ENCODE measurements at regions of chr2 and their contacts with region 1.

Region 1: GRCh38 chr2:62195421-62196277 is at the start of gene B3GNT2:
- DNase-seq: peak; percentile 90
- ATAC-seq: peak; percentile 81
- H3K4me3 ChIP-seq: peak within 1 kb of the TSS; percentile 68 to 96 (median 93)
- H3K4me3 Mint-ChIP-seq: peak within 1 kb of the TSS; percentile 91
- H3K27ac ChIP-seq: peak within 1 kb of the TSS; percentile 80 to 89
- H3K27ac Mint-ChIP-seq: peak within 1 kb of the TSS; percentile 89
- H3K4me1 ChIP-seq: peaks cover 38 to 44% of the 10 kb centered on the region in 2 donors
- H3K4me1 Mint-ChIP-seq: peaks cover 37% of the 10 kb centered on the region
- H3K27me3 ChIP-seq: no peaks in the 10 kb centered on the region
- H3K27me3 Mint-ChIP-seq: no peaks in the 10 kb centered on the region
- CTCF ChIP-seq: no peak
- total RNA-seq, gene B3GNT2: 14.2 and 14.3 TPM in 2 replicates

Region 2: DNA sequence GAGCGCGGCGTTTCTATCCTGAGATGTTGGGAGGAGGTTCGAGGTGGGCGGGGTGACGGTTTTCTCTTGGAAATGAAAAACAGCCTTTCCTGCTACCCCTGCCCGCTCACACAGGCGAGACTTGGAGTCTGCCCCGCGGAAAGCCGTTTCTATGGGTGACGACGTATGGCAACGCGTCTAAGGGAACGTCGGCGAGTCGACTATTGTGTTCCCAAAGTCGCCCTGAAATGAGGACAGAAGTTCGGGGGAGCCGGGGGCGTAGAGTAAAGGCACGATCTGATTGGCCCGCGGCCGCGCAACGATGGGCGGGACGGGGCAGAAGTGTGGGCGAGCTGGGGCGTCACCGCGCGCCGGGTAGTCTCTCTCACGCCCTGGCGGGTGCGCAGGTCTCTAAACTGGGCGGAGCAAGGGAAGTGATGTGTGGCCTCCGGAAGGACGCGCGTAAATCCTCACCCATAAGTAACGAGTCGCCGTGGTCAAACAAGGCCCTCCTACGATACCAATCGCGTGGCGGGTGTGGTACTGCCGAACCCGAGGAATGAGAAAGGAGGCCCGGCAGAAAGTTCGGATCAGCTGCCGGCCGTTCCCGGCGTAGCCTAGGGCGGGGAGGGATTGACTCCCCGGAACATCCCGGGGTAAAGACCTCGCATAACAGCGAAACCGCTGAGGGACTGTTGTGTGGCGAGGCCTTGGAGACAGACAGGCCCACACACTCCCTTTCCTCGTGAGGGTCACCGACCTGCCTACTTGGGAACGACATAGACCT is 431.4 kb before region 1 on chr2:
- CTCF ChIA-PET with region 1: no interaction called
- POLR2A ChIA-PET with region 1: no interaction called
- intact Hi-C with region 1: loop called (anchors 2 kb)
- DNase-seq: peak; percentile 98
- ATAC-seq: peak; percentile 98
- H3K4me3 ChIP-seq: peak overlapping the region; percentile 89 to 94 (median 92)
- H3K4me3 Mint-ChIP-seq: peak overlapping the region; percentile 90
- H3K27ac ChIP-seq: peak overlapping the region; percentile 96 to 98
- H3K27ac Mint-ChIP-seq: peak overlapping the region; percentile 96
- H3K4me1 ChIP-seq: peaks cover 4 to 10% of the 10 kb centered on the region in 2 donors
- H3K4me1 Mint-ChIP-seq: peaks cover 14% of the 10 kb centered on the region
- H3K27me3 ChIP-seq: no peaks in the 10 kb centered on the region
- H3K27me3 Mint-ChIP-seq: peaks cover 2% of the 10 kb centered on the region
- CTCF ChIP-seq: no peak

Region 3: GRCh38 chr2:61910603-61911002 is 285.0 kb before region 1 on chr2:
- CTCF ChIA-PET with region 1: no interaction called
- POLR2A ChIA-PET with region 1: no interaction called
- intact Hi-C with region 1: loop called (anchors 5 kb)
- DNase-seq: no peak
- ATAC-seq: no peak
- H3K4me3 ChIP-seq: no peak overlapping the region
- H3K4me3 Mint-ChIP-seq: no peak overlapping the region
- H3K27ac ChIP-seq: no peak overlapping the region
- H3K27ac Mint-ChIP-seq: no peak overlapping the region
- H3K4me1 ChIP-seq: peaks cover 3 to 4% of the 10 kb centered on the region in 2 donors
- H3K4me1 Mint-ChIP-seq: peaks cover 9% of the 10 kb centered on the region
- H3K27me3 ChIP-seq: no peaks in the 10 kb centered on the region
- H3K27me3 Mint-ChIP-seq: no peaks in the 10 kb centered on the region
- CTCF ChIP-seq: no peak

Region 4: DNA sequence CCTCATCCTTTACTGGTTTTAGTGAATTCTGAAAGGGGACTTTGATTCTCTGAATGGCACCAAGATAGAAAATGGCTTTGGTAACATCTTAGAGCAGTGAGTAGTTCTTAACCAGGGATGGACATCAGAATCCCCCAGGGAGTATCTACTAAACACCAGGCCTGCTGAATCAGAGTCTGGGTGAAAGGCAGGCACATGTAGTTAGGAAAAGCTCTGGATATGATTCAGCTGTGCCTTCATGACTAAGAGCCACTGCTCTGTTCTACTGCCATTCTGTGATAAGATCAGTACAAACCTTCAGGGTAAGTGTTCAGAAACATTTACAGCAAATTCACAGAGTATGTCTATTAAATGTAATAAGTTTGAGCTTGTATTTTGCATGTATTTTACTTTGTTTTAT is 45.9 kb before region 1 on chr2:
- CTCF ChIA-PET with region 1: no interaction called
- POLR2A ChIA-PET with region 1: no interaction called
- intact Hi-C with region 1: loop called (anchors 5 kb)
- DNase-seq: no peak
- ATAC-seq: no peak
- H3K4me3 ChIP-seq: no peak overlapping the region
- H3K4me3 Mint-ChIP-seq: no peak overlapping the region
- H3K27ac ChIP-seq: no peak overlapping the region
- H3K27ac Mint-ChIP-seq: no peak overlapping the region
- H3K4me1 ChIP-seq: peaks cover 16 to 25% of the 10 kb centered on the region in 2 donors
- H3K4me1 Mint-ChIP-seq: peaks cover 28% of the 10 kb centered on the region
- H3K27me3 ChIP-seq: no peaks in the 10 kb centered on the region
- H3K27me3 Mint-ChIP-seq: no peaks in the 10 kb centered on the region
- CTCF ChIP-seq: no peak

Region 5: GRCh38 chr2:62178741-62179271 is 16.8 kb before region 1 on chr2:
- CTCF ChIA-PET with region 1: no interaction called
- POLR2A ChIA-PET with region 1: no interaction called
- intact Hi-C with region 1: no loop called
- DNase-seq: no peak
- ATAC-seq: no peak
- H3K4me3 ChIP-seq: no peak overlapping the region
- H3K4me3 Mint-ChIP-seq: no peak overlapping the region
- H3K27ac ChIP-seq: no peak overlapping the region
- H3K27ac Mint-ChIP-seq: no peak overlapping the region
- H3K4me1 ChIP-seq: peaks cover 11 to 13% of the 10 kb centered on the region in 2 donors
- H3K4me1 Mint-ChIP-seq: peaks cover 19% of the 10 kb centered on the region
- H3K27me3 ChIP-seq: no peaks in the 10 kb centered on the region
- H3K27me3 Mint-ChIP-seq: no peaks in the 10 kb centered on the region
- CTCF ChIP-seq: no peak

Region 6: DNA sequence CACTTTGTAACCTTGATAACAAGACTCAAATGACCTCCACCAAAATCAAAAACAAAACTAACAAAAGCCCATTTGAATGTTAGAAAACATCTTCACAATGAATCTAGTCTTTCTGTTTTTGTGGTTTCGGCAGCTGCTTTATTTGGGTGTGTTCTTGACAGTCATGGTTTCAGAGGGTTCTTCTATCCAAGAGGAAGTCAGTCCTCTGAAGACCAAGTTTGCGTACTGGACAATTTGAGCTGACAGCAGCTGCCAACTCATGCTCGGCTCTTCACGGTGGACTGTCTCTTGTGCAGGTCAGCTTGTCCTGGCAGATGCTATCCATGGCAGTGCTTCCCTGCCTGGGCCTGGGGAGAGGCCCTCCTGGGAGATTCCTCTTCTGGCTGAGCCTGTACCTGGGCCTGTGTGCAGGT is 219.4 kb after region 1 on chr2:
- CTCF ChIA-PET with region 1: interaction called, 7 read pairs
- POLR2A ChIA-PET with region 1: no interaction called
- intact Hi-C with region 1: loop called (anchors 5 kb)
- DNase-seq: no peak
- ATAC-seq: no peak
- H3K4me3 ChIP-seq: no peak overlapping the region
- H3K4me3 Mint-ChIP-seq: no peak overlapping the region
- H3K27ac ChIP-seq: peak overlapping the region in 1 of 2 donors; percentile 28
- H3K27ac Mint-ChIP-seq: no peak overlapping the region
- H3K4me1 ChIP-seq: peaks cover 8 to 17% of the 10 kb centered on the region in 2 donors
- H3K4me1 Mint-ChIP-seq: peaks cover 6% of the 10 kb centered on the region
- H3K27me3 ChIP-seq: no peaks in the 10 kb centered on the region
- H3K27me3 Mint-ChIP-seq: peaks cover 3% of the 10 kb centered on the region
- CTCF ChIP-seq: no peak

Region 7: DNA sequence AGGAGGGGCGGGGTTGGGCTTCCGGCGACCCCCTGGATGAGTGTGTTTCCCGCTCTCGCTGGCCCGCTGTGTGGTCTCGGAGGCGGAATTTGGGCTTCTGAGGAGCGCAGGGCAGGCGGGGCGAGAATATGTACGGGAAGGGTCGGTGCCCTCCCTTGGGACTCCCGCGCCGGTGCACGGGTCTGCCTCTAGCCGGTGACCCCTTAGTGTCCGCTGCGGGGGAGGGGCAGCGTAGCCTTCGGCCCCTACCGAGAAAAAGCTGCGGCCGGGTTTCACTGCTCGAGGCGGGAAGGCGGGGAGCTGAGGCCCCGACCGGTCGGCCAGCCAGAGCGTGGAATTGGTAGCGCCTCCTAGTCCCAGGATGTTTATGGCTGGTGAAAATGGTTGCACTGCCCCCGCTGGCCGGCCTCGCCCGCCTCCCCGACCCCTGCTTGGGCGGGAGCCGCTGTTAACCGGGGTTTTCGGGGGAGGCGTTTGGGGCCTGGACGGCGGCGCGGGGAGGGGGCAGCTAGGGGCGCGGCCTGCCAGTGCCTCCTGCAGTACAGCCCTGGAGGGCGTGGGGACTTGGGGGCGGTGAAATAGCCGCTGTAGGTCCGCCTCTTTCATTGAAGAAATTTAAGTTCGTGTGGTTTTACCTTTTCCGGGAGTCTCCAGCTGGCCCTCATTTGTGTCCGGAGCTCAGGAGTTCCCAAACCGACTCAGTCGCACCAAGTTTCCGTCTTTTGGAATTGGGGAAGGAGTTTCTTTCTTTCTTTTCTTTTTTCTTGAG is 1645.8 kb after region 1 on chr2 and contains the start of gene UGP2:
- CTCF ChIA-PET with region 1: no interaction called
- POLR2A ChIA-PET with region 1: no interaction called
- intact Hi-C with region 1: loop called (anchors 10 kb)
- DNase-seq: peak; percentile 88
- ATAC-seq: peak; percentile 60
- H3K4me3 ChIP-seq: peak within 1 kb of the TSS; percentile 86 to 98 (median 96)
- H3K4me3 Mint-ChIP-seq: peak within 1 kb of the TSS; percentile 98
- H3K27ac ChIP-seq: peak within 1 kb of the TSS; percentile 82 to 91
- H3K27ac Mint-ChIP-seq: peak within 1 kb of the TSS; percentile 95
- H3K4me1 ChIP-seq: peaks cover 19 to 20% of the 10 kb centered on the region in 2 donors
- H3K4me1 Mint-ChIP-seq: peaks cover 51% of the 10 kb centered on the region
- H3K27me3 ChIP-seq: no peaks in the 10 kb centered on the region
- H3K27me3 Mint-ChIP-seq: no peaks in the 10 kb centered on the region
- CTCF ChIP-seq: no peak
- total RNA-seq, gene UGP2: 61.5 and 68.8 TPM in 2 replicates